ENCODE measurements at regions of chr1 and their contacts with region 1.

Region 1: GRCh38 chr1:10032590-10033358 is at the start of gene UBE4B:
- DNase-seq: peak; percentile 99
- H3K4me3 Mint-ChIP-seq: peak within 1 kb of the TSS; percentile 93
- H3K27ac Mint-ChIP-seq: peak within 1 kb of the TSS; percentile 88
- H3K4me1 Mint-ChIP-seq: peaks cover 23% of the 10 kb centered on the region
- H3K27me3 Mint-ChIP-seq: peaks cover 2% of the 10 kb centered on the region
- total RNA-seq, gene UBE4B: 31.3 and 32.5 TPM in 2 replicates

Region 2: DNA sequence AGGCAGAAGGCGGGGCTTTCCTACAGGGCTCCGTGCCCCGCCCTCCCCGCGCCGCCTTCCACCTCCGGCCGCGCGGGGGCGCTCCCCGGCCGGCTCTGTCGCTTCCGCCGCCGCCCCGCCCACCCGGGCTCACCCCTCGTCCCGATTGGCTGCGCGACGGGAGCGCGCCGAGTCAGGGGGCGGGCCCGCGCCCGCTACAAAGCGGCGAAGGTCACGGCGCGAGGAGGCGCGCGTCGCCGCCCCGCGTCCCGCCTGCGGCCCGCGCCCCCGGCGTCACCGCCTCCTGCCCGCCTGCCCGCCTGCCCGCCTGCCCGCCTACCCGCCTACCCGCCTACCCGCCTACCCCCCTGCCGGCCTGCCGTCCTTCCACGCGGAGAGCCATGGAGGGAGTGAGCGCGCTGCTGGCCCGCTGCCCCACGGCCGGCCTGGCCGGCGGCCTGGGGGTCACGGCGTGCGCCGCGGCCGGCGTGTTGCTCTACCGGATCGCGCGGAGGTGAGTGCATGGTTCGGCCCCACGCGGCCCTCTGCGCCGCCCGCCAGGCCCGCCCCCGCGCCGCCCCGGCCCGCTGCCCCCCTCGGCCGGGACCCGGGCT is 444.1 kb before region 1 on chr1 and contains the start of gene TMEM201:
- intact Hi-C with region 1: loop called (anchors 1 kb)
- DNase-seq: peak; percentile 94
- H3K4me3 Mint-ChIP-seq: peak within 1 kb of the TSS; percentile 72
- H3K27ac Mint-ChIP-seq: peak within 1 kb of the TSS; percentile 48
- H3K4me1 Mint-ChIP-seq: peaks cover 30% of the 10 kb centered on the region
- H3K27me3 Mint-ChIP-seq: no peaks in the 10 kb centered on the region
- total RNA-seq, gene TMEM201: 36.7 and 38.7 TPM in 2 replicates

Region 3: DNA sequence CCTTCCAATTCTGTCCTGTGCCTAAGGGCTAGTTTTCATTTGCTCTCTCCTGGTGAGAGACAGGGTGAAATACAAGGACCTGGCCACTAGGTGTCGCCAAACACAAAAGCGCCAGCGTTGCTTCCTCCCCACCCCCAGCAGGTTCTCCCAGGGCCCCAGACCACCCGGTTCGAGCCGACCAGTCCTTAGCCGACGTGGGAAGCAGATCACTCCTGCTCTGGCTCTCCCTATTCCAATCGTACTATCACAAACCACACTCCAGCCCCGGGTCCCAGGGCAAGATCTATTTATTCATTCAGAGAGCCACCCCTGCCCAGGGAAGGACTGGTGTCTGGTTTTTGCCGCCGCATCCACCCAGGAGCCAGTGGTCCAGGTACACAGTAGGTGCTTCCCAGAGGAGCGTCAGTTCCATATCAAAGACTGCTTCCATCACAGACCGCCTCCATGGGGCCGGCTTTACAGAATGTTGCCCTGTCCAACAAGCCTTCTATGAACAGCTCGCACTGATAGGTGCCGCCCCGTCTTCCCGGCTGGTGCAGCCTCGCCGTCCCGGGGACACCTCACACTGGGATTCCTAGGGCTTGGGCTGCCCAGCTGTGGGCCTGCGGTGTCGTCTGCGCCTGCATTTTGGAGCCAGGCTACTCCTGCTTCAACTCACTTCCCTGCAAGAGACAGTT is 157.7 kb before region 1 on chr1:
- intact Hi-C with region 1: loop called (anchors 1 kb)
- DNase-seq: peak; percentile 60
- H3K4me3 Mint-ChIP-seq: no peak overlapping the region
- H3K27ac Mint-ChIP-seq: no peak overlapping the region
- H3K4me1 Mint-ChIP-seq: peaks cover 7% of the 10 kb centered on the region
- H3K27me3 Mint-ChIP-seq: no peaks in the 10 kb centered on the region

Region 4: DNA sequence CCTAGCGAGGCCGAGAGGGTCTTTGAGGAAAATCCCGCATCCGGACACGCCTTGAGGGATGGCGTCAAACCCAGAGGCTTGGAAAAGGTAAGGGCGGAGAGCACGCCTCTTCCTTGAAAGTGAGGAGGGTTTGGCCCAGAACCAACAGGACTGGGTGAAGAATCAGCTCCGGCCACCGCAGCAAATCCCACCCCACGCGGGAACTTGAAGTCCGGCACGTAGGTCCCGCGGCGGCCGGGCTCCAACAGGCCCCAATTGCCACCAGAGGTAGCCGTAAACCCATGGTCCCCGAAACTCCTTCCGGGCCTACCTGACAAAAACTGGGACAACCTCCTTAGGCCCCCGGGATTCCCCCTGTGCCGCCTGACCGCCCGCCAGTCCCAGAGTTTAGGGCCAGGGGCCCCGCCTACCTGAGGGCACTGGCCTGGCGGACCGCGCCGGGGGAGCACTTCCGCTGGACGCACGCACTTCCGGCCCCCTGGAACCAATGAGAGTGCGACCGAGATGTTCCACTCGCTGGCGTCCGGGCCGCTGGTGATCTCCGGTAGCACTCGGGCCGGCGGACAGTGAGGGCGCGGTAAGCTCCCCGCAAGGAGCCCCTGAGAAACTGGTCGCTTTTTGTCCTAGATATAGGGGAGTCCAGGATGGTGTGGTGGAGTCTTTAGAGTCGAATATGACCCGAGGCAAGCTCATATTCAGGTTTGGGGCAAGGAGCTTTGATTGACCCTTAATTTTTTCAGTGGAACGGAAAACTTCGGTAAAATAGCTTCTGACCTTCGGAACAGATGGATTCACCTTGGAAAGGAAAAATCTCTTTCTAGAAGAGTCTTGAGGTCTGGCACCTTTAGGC is 89.6 kb before region 1 on chr1 and contains the starts of genes LZIC and NMNAT1:
- intact Hi-C with region 1: loop called (anchors 1 kb)
- DNase-seq: peak; percentile 88
- H3K4me3 Mint-ChIP-seq: peak within 1 kb of the TSS; percentile 100
- H3K27ac Mint-ChIP-seq: peak within 1 kb of the TSS; percentile 97
- H3K4me1 Mint-ChIP-seq: peaks cover 12% of the 10 kb centered on the region
- H3K27me3 Mint-ChIP-seq: no peaks in the 10 kb centered on the region
- total RNA-seq, gene LZIC: 29.9 and 35.9 TPM in 2 replicates
- total RNA-seq, gene NMNAT1: 5.0 and 5.8 TPM in 2 replicates

Region 5: GRCh38 chr1:10209905-10210810 is 177.4 kb after region 1 on chr1 and contains the start of gene KIF1B:
- intact Hi-C with region 1: loop called (anchors 2 kb)
- DNase-seq: peak; percentile 97
- H3K4me3 Mint-ChIP-seq: peak within 1 kb of the TSS; percentile 92
- H3K27ac Mint-ChIP-seq: peak within 1 kb of the TSS; percentile 83
- H3K4me1 Mint-ChIP-seq: peaks cover 35% of the 10 kb centered on the region
- H3K27me3 Mint-ChIP-seq: peaks cover 12% of the 10 kb centered on the region
- total RNA-seq, gene KIF1B: 15.8 and 19.0 TPM in 2 replicates

Region 6: DNA sequence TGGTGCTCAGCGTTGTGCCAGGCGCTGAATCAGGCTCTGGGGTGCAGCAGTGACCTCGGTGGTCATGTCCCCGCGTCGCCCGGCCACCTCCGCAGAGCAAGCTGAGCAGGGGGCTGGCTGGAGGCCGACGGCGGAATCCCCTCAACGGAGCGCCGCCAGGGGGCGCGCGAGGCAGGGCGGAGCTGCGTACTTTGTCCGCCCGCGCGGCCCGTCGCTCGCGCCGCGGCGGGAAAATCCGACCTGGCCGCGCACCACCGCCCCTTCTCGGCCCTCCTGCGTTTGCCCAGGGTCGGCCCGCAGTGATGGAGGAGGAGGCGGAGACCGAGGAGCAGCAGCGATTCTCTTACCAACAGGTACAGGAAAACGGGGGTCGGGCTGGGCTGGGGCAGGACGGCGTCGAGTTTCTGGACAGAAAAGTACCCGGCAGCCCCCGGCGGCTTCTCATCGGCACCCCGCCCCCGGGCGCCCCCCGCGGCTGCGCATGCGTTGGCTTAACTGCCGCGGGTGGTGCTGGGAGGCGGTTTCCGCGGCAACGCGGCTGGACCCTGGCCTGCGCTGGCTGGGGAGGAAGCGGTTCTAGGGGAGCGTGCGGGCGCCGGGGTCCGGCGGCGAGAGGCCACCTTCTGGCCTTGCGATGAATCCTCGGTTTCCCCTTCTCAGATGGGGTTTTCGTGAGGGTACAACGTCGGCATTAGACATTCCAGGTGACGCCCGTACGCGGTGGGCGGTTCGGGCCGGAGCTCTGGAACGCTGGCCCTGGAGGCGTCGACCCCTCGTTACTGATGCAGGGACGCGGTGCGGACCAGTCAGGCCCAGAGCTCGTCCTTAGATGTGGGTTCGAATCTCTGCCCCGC is 397.7 kb after region 1 on chr1 and contains the start of gene CENPS:
- intact Hi-C with region 1: loop called (anchors 1 kb)
- DNase-seq: peak; percentile 86
- H3K4me3 Mint-ChIP-seq: peak within 1 kb of the TSS; percentile 92
- H3K27ac Mint-ChIP-seq: peak within 1 kb of the TSS; percentile 92
- H3K4me1 Mint-ChIP-seq: peaks cover 24% of the 10 kb centered on the region
- H3K27me3 Mint-ChIP-seq: no peaks in the 10 kb centered on the region
- total RNA-seq, gene CENPS: 22.1 and 23.4 TPM in 2 replicates